Activated CD4-positive, alpha-beta memory T cell treated with anti-CD3 and anti-CD28 coated beads for 36 hours (primary cell): ENCODE measurements at regions of chr11 and their contacts with region 1.

Region 1: DNA sequence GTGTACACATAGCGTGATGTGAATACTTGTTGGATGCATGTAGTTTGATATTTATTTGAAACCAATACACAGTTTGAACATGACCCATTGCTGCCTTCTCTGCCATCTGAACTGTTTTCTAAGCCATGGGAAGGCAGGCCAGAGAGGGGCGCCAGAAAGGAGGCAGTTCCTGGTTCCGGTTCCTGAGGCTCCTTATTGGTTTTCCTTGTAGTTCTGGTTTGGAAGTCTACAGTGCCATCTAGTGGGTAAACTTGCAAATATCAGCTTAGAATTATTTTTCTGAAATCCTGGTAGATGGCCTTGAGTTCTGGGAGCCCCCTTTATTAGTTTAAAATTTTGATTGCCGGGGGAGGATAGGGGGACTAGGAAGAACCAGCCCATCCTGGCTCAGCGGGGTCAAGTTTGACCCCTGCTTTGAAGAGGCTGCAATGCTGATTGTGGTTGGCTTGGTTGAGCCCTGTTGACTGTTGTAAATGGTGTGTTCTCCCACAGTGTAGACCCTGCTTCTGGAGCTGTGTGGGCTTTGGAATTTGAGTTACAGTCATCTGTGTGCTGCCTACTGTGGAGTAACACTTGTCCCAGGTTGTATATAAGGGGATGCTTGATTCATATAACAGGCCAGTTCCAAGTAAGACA is 48.4 kb downstream of the GRAMD1B start:
- DNase-seq: peak; percentile 38
- H3K4me3 Mint-ChIP-seq: peak overlapping the region; percentile 27
- H3K27ac Mint-ChIP-seq: peak overlapping the region; percentile 56
- H3K4me1 Mint-ChIP-seq: peaks cover 43% of the 10 kb centered on the region
- H3K27me3 Mint-ChIP-seq: no peaks in the 10 kb centered on the region

Region 2: DNA sequence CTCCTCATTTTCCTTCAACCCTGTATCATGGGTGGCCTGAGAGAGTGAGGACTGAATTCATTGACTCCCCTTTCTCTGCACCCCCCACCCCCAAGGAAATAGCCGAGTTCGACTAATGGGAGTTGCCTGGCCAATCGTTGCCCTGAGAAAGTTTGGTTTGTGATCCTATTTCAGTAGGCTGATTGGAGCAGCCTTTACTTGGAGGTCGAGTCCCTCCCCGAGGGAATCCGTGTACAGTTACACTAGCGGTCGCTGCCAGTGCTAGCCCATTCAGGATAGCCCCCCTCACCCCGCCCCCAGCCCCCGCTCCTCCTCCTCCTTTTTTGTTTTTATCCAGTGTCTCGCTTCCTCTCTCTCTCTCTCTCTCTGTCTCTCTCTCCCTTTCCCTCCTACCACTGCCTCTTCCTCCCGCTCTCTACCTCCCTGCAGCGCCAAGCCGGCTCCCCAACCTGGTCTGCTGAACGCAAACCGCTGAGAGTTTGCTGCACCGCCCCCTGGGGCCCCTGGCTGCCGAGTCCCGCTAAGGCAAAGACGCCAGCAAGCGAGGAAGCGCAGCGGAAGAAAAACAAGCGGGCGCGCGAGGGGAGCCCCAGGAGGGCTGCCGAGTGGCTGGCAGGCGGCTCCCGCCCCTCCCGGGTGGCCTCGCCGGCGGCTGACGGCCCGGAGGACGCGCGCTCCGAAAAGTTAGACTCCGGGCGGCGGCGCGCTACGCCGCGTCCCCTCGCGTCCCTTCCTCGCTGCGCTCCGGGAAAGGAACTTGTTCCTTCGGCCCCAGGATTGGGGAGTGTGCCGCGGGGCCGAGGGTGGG is 48.4 kb before region 1 on chr11 and contains the start of gene GRAMD1B:
- CTCF ChIA-PET with region 1: interaction called, 9 read pairs
- POLR2A ChIA-PET with region 1: no interaction called
- intact Hi-C with region 1: loop called (anchors 1 kb)
- DNase-seq: peak; percentile 85
- H3K4me3 Mint-ChIP-seq: peak within 1 kb of the TSS; percentile 85
- H3K27ac Mint-ChIP-seq: peak within 1 kb of the TSS; percentile 90
- H3K4me1 Mint-ChIP-seq: peaks cover 40% of the 10 kb centered on the region
- H3K27me3 Mint-ChIP-seq: no peaks in the 10 kb centered on the region
- total RNA-seq, gene GRAMD1B: 36.8 to 39.0 TPM

Region 3: DNA sequence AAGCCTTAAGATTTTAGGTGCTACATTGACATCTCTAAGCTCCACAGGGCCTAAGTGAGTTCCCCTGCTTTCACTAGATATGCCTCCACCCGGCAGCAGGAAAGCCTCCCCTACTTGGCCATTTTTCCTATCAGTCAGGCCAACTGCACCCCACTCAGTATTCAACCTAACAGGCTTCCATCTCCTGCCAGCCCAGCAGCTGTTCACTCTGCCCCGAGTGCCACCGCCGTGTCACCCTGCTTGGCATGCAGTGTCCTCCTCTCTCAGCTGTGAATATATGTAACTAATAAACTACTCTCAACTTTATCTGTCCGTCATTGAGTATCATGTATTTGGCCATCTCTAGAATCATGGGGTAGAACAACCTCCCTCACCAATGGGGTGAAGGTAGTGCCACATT is 336.7 kb after region 1 on chr11:
- CTCF ChIA-PET with region 1: no interaction called
- POLR2A ChIA-PET with region 1: no interaction called
- intact Hi-C with region 1: no loop called
- DNase-seq: no peak
- H3K4me3 Mint-ChIP-seq: no peak overlapping the region
- H3K27ac Mint-ChIP-seq: no peak overlapping the region
- H3K4me1 Mint-ChIP-seq: no peaks in the 10 kb centered on the region
- H3K27me3 Mint-ChIP-seq: peaks cover 3% of the 10 kb centered on the region